ENCODE measurements at regions of chr14 and their contacts with region 1.

Region 1: DNA sequence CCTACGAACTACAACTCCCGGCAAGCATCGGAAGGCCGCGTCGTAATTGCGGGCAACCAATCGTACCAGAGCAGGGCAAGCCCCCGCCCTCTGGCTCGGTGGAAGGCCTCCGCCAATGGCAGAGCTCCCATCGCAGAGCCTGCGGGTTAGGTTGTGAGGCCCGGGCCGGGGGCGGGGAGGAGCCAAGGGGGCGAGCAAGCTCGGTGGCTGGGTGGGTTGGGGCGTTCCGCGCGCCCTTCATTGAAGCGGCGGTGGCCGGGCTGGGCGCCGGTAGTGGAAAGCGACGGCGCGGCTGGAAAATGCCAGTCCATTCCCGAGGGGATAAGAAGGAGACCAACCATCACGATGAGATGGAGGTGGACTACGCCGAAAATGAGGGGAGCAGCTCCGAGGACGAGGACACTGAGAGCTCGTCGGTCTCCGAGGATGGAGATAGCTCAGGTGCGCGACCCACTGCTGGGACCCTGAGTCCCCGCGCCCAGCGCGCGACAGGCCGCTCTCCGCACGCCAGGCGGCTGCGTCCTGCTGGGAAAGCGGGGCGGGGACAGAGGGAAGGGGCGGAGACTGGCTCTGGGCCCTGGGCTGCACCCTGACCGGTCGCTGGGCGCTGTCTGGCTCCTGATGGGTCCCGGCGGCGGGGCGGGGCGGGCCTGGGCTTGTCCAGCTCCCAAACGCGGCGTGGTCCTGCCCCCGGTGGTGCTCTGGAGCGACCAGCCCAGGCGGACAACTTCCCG is at the start of gene BRMS1L:
- DNase-seq: peak; percentile 98 to 99
- H3K4me3 ChIP-seq: peak within 1 kb of the TSS; percentile 97
- H3K4me3 Mint-ChIP-seq: peak within 1 kb of the TSS; percentile 78
- H3K27ac Mint-ChIP-seq: peak within 1 kb of the TSS; percentile 81
- H3K4me1 ChIP-seq: peaks cover 6% of the 10 kb centered on the region; the same call in 1 of the 2 replicates
- H3K4me1 Mint-ChIP-seq: peaks cover 7% of the 10 kb centered on the region
- H3K27me3 ChIP-seq: no peaks in the 10 kb centered on the region
- H3K27me3 Mint-ChIP-seq: no peaks in the 10 kb centered on the region
- CTCF ChIP-seq: no peak
- total RNA-seq, gene BRMS1L: 10.4 and 11.4 TPM in 2 replicates

Region 2: GRCh38 chr14:35669805-35670204 is 156.6 kb before region 1 on chr14:
- CTCF ChIA-PET with region 1: no interaction called
- POLR2A ChIA-PET with region 1: no interaction called
- intact Hi-C with region 1: no loop called
- DNase-seq: peak; percentile 41 to 59
- H3K4me3 ChIP-seq: no peak overlapping the region
- H3K4me3 Mint-ChIP-seq: no peak overlapping the region
- H3K27ac Mint-ChIP-seq: no peak overlapping the region
- H3K4me1 ChIP-seq: peaks cover 13% of the 10 kb centered on the region
- H3K4me1 Mint-ChIP-seq: peaks cover 23% of the 10 kb centered on the region
- H3K27me3 ChIP-seq: no peaks in the 10 kb centered on the region
- H3K27me3 Mint-ChIP-seq: no peaks in the 10 kb centered on the region
- CTCF ChIP-seq: no peak

Region 3: GRCh38 chr14:35747379-35747778 is 79.0 kb before region 1 on chr14:
- CTCF ChIA-PET with region 1: no interaction called
- POLR2A ChIA-PET with region 1: no interaction called
- intact Hi-C with region 1: no loop called
- DNase-seq: no peak
- H3K4me3 ChIP-seq: no peak overlapping the region
- H3K4me3 Mint-ChIP-seq: no peak overlapping the region
- H3K27ac Mint-ChIP-seq: no peak overlapping the region
- H3K4me1 ChIP-seq: no peaks in the 10 kb centered on the region
- H3K4me1 Mint-ChIP-seq: no peaks in the 10 kb centered on the region
- H3K27me3 ChIP-seq: no peaks in the 10 kb centered on the region
- H3K27me3 Mint-ChIP-seq: no peaks in the 10 kb centered on the region
- CTCF ChIP-seq: no peak

Region 4: DNA sequence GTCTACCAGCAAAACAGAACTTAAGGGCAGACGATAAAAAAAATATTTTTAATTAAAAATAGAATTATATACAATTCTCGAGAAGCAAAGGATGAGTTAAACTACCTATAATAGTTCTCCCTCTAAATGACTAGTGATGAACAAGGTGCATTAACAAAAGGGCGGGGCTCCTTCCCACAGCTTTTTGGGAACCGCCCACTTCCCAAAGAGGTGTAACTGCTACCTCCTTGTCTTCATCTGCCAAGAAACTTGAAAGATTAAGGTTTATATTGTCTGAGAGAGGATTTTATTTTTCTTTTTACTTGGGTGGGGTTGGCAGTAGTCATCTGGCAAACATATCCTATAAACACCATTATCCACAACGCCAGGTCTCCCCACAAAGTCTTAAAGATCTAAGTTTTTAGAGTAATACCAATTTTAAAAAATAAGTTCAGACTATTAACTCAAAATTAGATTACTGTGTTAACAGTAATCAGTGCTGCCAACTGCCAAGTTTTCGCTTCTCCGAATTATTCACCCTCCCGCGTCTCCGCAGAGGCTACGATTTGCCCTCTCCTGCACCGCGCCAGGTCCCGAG is 18.2 kb before region 1 on chr14:
- CTCF ChIA-PET with region 1: interaction called, 9 read pairs
- POLR2A ChIA-PET with region 1: interaction called, 13 read pairs
- intact Hi-C with region 1: loop called (anchors 2 kb)
- DNase-seq: peak in 1 of 2 experiments; percentile 35
- H3K4me3 ChIP-seq: peak overlapping the region; percentile 59
- H3K4me3 Mint-ChIP-seq: peak overlapping the region; percentile 94
- H3K27ac Mint-ChIP-seq: peak overlapping the region; percentile 84
- H3K4me1 ChIP-seq: peaks cover 14% of the 10 kb centered on the region
- H3K4me1 Mint-ChIP-seq: peaks cover 13% of the 10 kb centered on the region
- H3K27me3 ChIP-seq: no peaks in the 10 kb centered on the region
- H3K27me3 Mint-ChIP-seq: no peaks in the 10 kb centered on the region
- CTCF ChIP-seq: no peak